Caco-2 (cell line): ENCODE measurements at regions of chr4 and their contacts with region 1.

Region 1: GRCh38 chr4:123350191-123350544 is 46.4 kb upstream of the SPRY1 start:
- DNase-seq: peak; percentile 73 to 80
- H3K4me3 ChIP-seq: no peak overlapping the region
- H3K4me3 Mint-ChIP-seq: peak overlapping the region; percentile 36
- H3K27ac Mint-ChIP-seq: peak overlapping the region; percentile 81
- H3K4me1 ChIP-seq: peaks cover 28% of the 10 kb centered on the region
- H3K4me1 Mint-ChIP-seq: peaks cover 34% of the 10 kb centered on the region
- H3K27me3 ChIP-seq: no peaks in the 10 kb centered on the region
- H3K27me3 Mint-ChIP-seq: no peaks in the 10 kb centered on the region
- CTCF ChIP-seq: peak in 1 of 2 experiments; percentile 44

Region 2: GRCh38 chr4:123127218-123127617 is 222.9 kb before region 1 on chr4:
- CTCF ChIA-PET with region 1: no interaction called
- POLR2A ChIA-PET with region 1: no interaction called
- intact Hi-C with region 1: loop called (anchors 1 kb)
- DNase-seq: no peak
- H3K4me3 ChIP-seq: no peak overlapping the region
- H3K4me3 Mint-ChIP-seq: no peak overlapping the region
- H3K27ac Mint-ChIP-seq: no peak overlapping the region
- H3K4me1 ChIP-seq: 0 out of 2 replicates have a peak, but pooled peaks cover 8% of the 10 kb centered on the region
- H3K4me1 Mint-ChIP-seq: no peaks in the 10 kb centered on the region
- H3K27me3 ChIP-seq: no peaks in the 10 kb centered on the region
- H3K27me3 Mint-ChIP-seq: no peaks in the 10 kb centered on the region
- CTCF ChIP-seq: no peak

Region 3: GRCh38 chr4:123477711-123478209 is 127.6 kb after region 1 on chr4:
- CTCF ChIA-PET with region 1: no interaction called
- POLR2A ChIA-PET with region 1: no interaction called
- intact Hi-C with region 1: loop called (anchors 1 kb)
- DNase-seq: no peak
- H3K4me3 ChIP-seq: no peak overlapping the region
- H3K4me3 Mint-ChIP-seq: peak overlapping the region; percentile 70
- H3K27ac Mint-ChIP-seq: peak overlapping the region; percentile 97
- H3K4me1 ChIP-seq: peaks cover 48% of the 10 kb centered on the region
- H3K4me1 Mint-ChIP-seq: peaks cover 50% of the 10 kb centered on the region
- H3K27me3 ChIP-seq: no peaks in the 10 kb centered on the region
- H3K27me3 Mint-ChIP-seq: no peaks in the 10 kb centered on the region
- CTCF ChIP-seq: no peak

Region 4: GRCh38 chr4:123649645-123650391 is 299.6 kb after region 1 on chr4:
- CTCF ChIA-PET with region 1: interaction called, 10 read pairs
- POLR2A ChIA-PET with region 1: no interaction called
- intact Hi-C with region 1: loop called (anchors 1 kb)
- DNase-seq: peak; percentile 70 to 78
- H3K4me3 ChIP-seq: peak overlapping the region; percentile 18
- H3K4me3 Mint-ChIP-seq: peak overlapping the region; percentile 69
- H3K27ac Mint-ChIP-seq: peak overlapping the region; percentile 96
- H3K4me1 ChIP-seq: peaks cover 18% of the 10 kb centered on the region
- H3K4me1 Mint-ChIP-seq: peaks cover 7% of the 10 kb centered on the region
- H3K27me3 ChIP-seq: no peaks in the 10 kb centered on the region
- H3K27me3 Mint-ChIP-seq: no peaks in the 10 kb centered on the region
- CTCF ChIP-seq: no peak

Region 5: DNA sequence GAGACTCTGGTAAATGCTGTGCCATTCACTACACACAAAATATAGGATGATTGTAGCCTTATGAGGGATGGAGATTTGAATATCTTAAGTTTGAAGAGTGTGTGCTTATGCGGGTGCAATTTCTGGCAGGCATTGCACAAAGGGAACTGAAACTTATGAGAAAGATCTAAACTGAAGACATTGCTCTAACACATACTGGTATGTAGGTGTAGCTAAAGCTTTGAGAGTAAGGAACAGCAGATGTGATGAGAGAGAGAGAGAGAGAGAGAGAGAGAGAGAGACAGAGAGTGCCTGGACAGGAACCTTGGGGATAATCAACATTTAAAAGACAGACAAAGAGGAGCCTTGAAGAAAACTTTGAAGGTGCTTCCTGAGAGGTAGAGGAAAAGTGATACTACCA is 426.1 kb after region 1 on chr4:
- CTCF ChIA-PET with region 1: no interaction called
- POLR2A ChIA-PET with region 1: no interaction called
- intact Hi-C with region 1: loop called (anchors 1 kb)
- DNase-seq: no peak
- H3K4me3 ChIP-seq: no peak overlapping the region
- H3K4me3 Mint-ChIP-seq: no peak overlapping the region
- H3K27ac Mint-ChIP-seq: no peak overlapping the region
- H3K4me1 ChIP-seq: no peaks in the 10 kb centered on the region
- H3K4me1 Mint-ChIP-seq: no peaks in the 10 kb centered on the region
- H3K27me3 ChIP-seq: no peaks in the 10 kb centered on the region; the same call in 1 of the 2 replicates
- H3K27me3 Mint-ChIP-seq: peaks cover 2% of the 10 kb centered on the region
- CTCF ChIP-seq: no peak